ENCODE measurements at regions of chr4 and their contacts with region 1.

Region 1: DNA sequence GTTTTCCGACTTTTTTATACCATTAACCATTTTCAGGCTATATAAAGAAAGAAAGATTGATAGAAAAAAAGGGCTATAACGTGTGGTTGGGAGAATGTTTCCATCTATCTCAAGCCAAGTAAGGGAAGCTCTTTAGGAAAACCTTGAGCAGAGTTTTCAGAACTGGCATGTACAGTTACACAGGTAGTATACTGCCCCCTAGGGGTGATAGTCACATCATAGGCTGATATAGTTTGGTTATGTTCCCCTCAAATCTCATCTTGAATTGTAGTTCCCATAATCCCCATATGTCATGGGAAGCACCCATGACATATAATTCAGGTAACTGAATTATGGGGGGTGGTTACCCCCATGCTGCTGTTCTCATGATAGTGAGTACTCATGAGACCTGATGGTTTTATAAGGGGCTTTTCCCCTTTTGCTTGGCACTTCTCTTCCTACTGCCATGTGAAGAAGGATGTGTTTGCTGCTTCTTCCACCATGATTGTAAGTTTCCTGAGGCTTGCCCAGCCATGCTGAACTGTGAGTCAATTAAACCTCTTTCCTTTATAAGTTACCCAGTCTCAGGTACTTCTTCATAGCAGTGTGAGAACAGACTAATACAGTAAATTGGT is 186.8 kb downstream of the TMA16 start:
- DNase-seq: no peak
- H3K4me3 Mint-ChIP-seq: no peak overlapping the region
- H3K27ac Mint-ChIP-seq: no peak overlapping the region
- H3K4me1 Mint-ChIP-seq: no peaks in the 10 kb centered on the region
- H3K27me3 Mint-ChIP-seq: no peaks in the 10 kb centered on the region

Region 2: DNA sequence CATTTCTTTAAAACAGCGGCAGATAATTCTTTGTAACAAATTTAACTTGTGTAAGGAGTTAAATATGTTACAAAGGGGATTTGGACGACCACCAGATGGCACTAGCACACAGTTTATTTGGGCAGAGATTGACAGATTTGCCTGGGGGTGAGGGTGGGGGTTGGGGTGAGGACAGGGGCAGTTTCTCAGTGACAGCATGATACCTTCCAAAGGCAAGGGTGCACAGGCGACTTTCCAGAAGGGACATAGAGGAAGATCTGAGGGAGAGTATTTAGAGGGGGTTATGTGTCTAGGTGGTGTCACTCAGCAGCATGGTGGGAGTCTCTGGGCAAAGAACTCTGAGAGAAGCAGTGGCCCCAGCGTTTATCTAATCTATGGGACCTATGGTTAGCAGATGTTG is 196.4 kb before region 1 on chr4:
- intact Hi-C with region 1: loop called (anchors 1 kb)
- DNase-seq: peak; percentile 24
- H3K4me3 Mint-ChIP-seq: no peak overlapping the region
- H3K27ac Mint-ChIP-seq: no peak overlapping the region
- H3K4me1 Mint-ChIP-seq: peaks cover 4% of the 10 kb centered on the region
- H3K27me3 Mint-ChIP-seq: peaks cover 18% of the 10 kb centered on the region

Region 3: GRCh38 chr4:163726641-163727040 is 45.3 kb after region 1 on chr4:
- intact Hi-C with region 1: no loop called
- DNase-seq: no peak
- H3K4me3 Mint-ChIP-seq: no peak overlapping the region
- H3K27ac Mint-ChIP-seq: no peak overlapping the region
- H3K4me1 Mint-ChIP-seq: no peaks in the 10 kb centered on the region
- H3K27me3 Mint-ChIP-seq: no peaks in the 10 kb centered on the region

Region 4: DNA sequence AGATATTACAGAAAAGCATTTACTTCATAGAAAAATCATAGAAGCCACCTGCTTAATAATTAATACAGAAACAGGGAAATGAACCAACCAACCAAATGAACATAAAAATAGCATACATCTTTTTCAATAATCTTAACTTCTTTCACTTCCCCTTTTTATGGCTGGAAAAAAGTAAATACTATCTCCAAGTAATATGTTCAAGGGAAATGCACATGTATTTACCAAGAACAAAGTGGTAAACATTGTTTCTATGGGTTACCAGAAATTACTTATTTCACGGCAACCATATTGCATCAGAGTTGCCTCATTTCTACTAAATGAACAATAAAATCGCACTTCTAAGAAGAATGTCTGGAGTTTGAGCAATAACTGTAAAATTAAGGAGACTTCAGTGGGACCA is 134.5 kb after region 1 on chr4:
- intact Hi-C with region 1: no loop called
- DNase-seq: no peak
- H3K4me3 Mint-ChIP-seq: no peak overlapping the region
- H3K27ac Mint-ChIP-seq: no peak overlapping the region
- H3K4me1 Mint-ChIP-seq: no peaks in the 10 kb centered on the region
- H3K27me3 Mint-ChIP-seq: no peaks in the 10 kb centered on the region

Measured in activated T-helper 2 cell treated with anti-CD3 and anti-CD28 coated beads, Interferon-gamma antibody, Interleukin-2, Interleukin-4, amounts not matched to agents 10 μg/mL and 5 μg/mL and 100 μg/mL, durations not matched to agents 14 hours and 24 hours and 36 hours (primary cell).